ENCODE measurements at regions of chr18 and their contacts with region 1.

Region 1: DNA sequence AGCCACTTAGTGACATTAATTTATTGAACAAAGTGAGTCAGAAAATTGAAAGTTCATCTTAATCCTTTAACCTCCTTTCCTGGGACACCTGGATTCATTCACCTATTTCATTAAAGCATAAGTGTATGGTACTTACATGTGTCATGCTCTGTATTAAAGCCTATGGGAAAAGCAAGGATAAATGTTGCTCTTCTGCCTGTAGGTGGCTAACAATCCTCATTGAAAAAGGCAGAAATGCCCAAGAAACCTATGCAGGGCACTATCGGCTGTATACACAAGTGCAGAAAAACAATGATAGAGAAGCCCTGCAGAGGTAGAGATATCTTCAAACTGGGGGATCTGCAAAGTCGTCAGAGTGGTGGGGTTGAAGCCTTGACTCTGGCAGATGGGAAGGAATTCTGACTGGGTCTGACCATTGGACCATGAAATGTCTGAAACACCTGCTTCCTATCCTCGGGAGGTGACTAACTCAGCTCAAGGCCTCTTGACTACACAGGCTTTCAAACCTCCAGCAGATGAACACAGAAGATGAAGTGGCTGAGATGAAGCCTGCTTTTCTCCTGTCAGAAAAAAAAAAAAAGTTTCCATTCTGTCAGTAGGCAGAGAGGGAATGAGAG is 83.1 kb downstream of the DCC start:
- DNase-seq: peak in 1 of 2 experiments; percentile 0
- H3K4me3 ChIP-seq: no peak overlapping the region
- H3K4me3 Mint-ChIP-seq: no peak overlapping the region
- H3K27ac Mint-ChIP-seq: no peak overlapping the region
- H3K4me1 ChIP-seq: no peaks in the 10 kb centered on the region
- H3K4me1 Mint-ChIP-seq: no peaks in the 10 kb centered on the region
- H3K27me3 ChIP-seq: no peaks in the 10 kb centered on the region
- H3K27me3 Mint-ChIP-seq: peaks cover 4% of the 10 kb centered on the region
- CTCF ChIP-seq: peak in 1 of 2 experiments; percentile 15

Region 2: GRCh38 chr18:52670896-52671295 is 247.8 kb after region 1 on chr18:
- CTCF ChIA-PET with region 1: no interaction called
- POLR2A ChIA-PET with region 1: no interaction called
- intact Hi-C with region 1: loop called (anchors 10 kb)
- DNase-seq: peak in 1 of 2 experiments; percentile 1
- H3K4me3 ChIP-seq: no peak overlapping the region
- H3K4me3 Mint-ChIP-seq: no peak overlapping the region
- H3K27ac Mint-ChIP-seq: no peak overlapping the region
- H3K4me1 ChIP-seq: no peaks in the 10 kb centered on the region
- H3K4me1 Mint-ChIP-seq: no peaks in the 10 kb centered on the region
- H3K27me3 ChIP-seq: no peaks in the 10 kb centered on the region
- H3K27me3 Mint-ChIP-seq: no peaks in the 10 kb centered on the region
- CTCF ChIP-seq: peak in 1 of 2 experiments; percentile 12

Measured in Caco-2 (cell line).